ENCODE measurements at regions of chr4 and their contacts with region 1.

Region 1: GRCh38 chr4:177119691-177120090 is 190.0 kb upstream of the NEIL3 start:
- DNase-seq: no peak
- H3K4me3 ChIP-seq: no peak overlapping the region
- H3K27ac ChIP-seq: no peak overlapping the region
- H3K4me1 ChIP-seq: peaks cover 11% of the 10 kb centered on the region
- H3K27me3 ChIP-seq: no peaks in the 10 kb centered on the region
- CTCF ChIP-seq: no peak

Region 2: GRCh38 chr4:177339477-177340374 is 220.0 kb after region 1 on chr4:
- CTCF ChIA-PET with region 1: no interaction called
- dilution Hi-C with region 1: no loop called
- in situ Hi-C with region 1: loop called in 1 of 2 experiments (anchors 25 kb)
- intact Hi-C with region 1: loop called (anchors 5 kb)
- DNase-seq: peak; percentile 35
- H3K4me3 ChIP-seq: no peak overlapping the region
- H3K27ac ChIP-seq: no peak overlapping the region
- H3K4me1 ChIP-seq: no peaks in the 10 kb centered on the region
- H3K27me3 ChIP-seq: no peaks in the 10 kb centered on the region
- CTCF ChIP-seq: peak; percentile 70 to 77

Measured in mammary epithelial cell (primary cell).